ENCODE measurements at regions of chr9 and their contacts with region 1.

Region 1: GRCh38 chr9:35732122-35732799 is at the starts of genes CREB3 and TLN1:
- DNase-seq: peak; percentile 92 to 98 (median 96)
- ATAC-seq: peak; percentile 91
- H3K4me3 ChIP-seq: peak within 1 kb of the TSS; percentile 91 to 99
- H3K4me3 Mint-ChIP-seq: peak within 1 kb of the TSS; percentile 93
- H3K27ac ChIP-seq: peak within 1 kb of the TSS; percentile 84 to 96
- H3K27ac Mint-ChIP-seq: peak within 1 kb of the TSS; percentile 88
- H3K4me1 ChIP-seq: peaks cover 62% of the 10 kb centered on the region
- H3K4me1 Mint-ChIP-seq: peaks cover 24% of the 10 kb centered on the region
- H3K27me3 ChIP-seq: no peaks in the 10 kb centered on the region
- H3K27me3 Mint-ChIP-seq: no peaks in the 10 kb centered on the region
- CTCF ChIP-seq: no peak
- total RNA-seq, gene CREB3: 13.1 to 14.2 TPM
- total RNA-seq, gene TLN1: 128 to 129 TPM

Region 2: GRCh38 chr9:35102926-35103659 is 629.2 kb before region 1 on chr9 and contains the start of gene STOML2:
- CTCF ChIA-PET with region 1: no interaction called
- POLR2A ChIA-PET with region 1: no interaction called
- intact Hi-C with region 1: loop called (anchors 1 to 5 kb)
- DNase-seq: peak; percentile 83 to 97 (median 93)
- ATAC-seq: peak; percentile 96
- H3K4me3 ChIP-seq: peak within 1 kb of the TSS; percentile 78 to 95
- H3K4me3 Mint-ChIP-seq: peak within 1 kb of the TSS; percentile 89
- H3K27ac ChIP-seq: peak within 1 kb of the TSS; percentile 79 to 92
- H3K27ac Mint-ChIP-seq: peak within 1 kb of the TSS; percentile 90
- H3K4me1 ChIP-seq: peaks cover 14% of the 10 kb centered on the region
- H3K4me1 Mint-ChIP-seq: peaks cover 27% of the 10 kb centered on the region
- H3K27me3 ChIP-seq: no peaks in the 10 kb centered on the region
- H3K27me3 Mint-ChIP-seq: no peaks in the 10 kb centered on the region
- CTCF ChIP-seq: no peak
- total RNA-seq, gene STOML2: 30.5 to 31.3 TPM

Region 3: DNA sequence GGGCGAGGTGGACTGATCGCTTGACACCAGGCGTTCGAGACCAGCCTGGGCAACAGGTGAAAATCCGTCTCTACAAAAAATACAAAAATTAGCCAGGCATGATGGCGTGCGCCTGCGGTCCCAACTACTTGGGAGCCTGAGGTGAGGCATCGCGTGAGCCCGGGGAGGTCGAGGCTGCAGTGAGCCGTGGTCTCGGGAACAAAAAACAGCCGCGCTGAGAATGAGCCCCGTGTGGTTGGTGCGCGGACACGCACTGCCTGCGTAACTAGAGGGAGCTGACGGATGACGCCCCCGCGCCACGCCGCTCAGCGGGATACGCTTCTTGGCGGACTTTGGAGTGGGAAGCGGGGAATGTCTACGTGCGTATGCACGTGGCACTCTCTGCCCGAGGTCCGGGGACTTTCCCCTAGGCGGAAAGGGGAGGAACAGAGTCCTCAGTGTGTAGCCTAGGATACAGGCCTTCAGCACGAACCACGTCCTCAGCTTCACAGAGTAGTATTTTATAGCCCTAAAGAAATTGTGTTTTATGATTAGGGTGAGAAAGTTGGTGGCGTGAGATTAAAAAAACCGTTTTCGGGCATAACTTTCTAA is 74.6 kb before region 1 on chr9 and contains the start of gene RMRP:
- CTCF ChIA-PET with region 1: interaction called, 61 read pairs
- POLR2A ChIA-PET with region 1: interaction called, 17 read pairs
- intact Hi-C with region 1: loop called (anchors 1 kb)
- DNase-seq: peak; percentile 58 to 98 (median 83)
- ATAC-seq: peak; percentile 72
- H3K4me3 ChIP-seq: peak within 1 kb of the TSS; percentile 91 to 94
- H3K4me3 Mint-ChIP-seq: peak within 1 kb of the TSS; percentile 93
- H3K27ac ChIP-seq: peak within 1 kb of the TSS; percentile 99 to 100
- H3K27ac Mint-ChIP-seq: peak within 1 kb of the TSS; percentile 98
- H3K4me1 ChIP-seq: peaks cover 45% of the 10 kb centered on the region
- H3K4me1 Mint-ChIP-seq: peaks cover 69% of the 10 kb centered on the region
- H3K27me3 ChIP-seq: peaks cover 0 to 3% of the 10 kb centered on the region in 2 experiments
- H3K27me3 Mint-ChIP-seq: peaks cover 2% of the 10 kb centered on the region
- CTCF ChIP-seq: no peak
- total RNA-seq, gene RMRP: 22,073 to 26,359 TPM

Region 4: GRCh38 chr9:35748858-35749514 is 16.7 kb after region 1 on chr9 and contains the starts of genes GBA2 and RGP1:
- CTCF ChIA-PET with region 1: interaction called, 33 read pairs
- POLR2A ChIA-PET with region 1: interaction called, 38 read pairs
- intact Hi-C with region 1: loop called (anchors 1 kb)
- DNase-seq: peak in 8 of 9 experiments; percentile 50 to 80 (median 66)
- ATAC-seq: peak; percentile 66
- H3K4me3 ChIP-seq: peak within 1 kb of the TSS; percentile 80 to 91
- H3K4me3 Mint-ChIP-seq: peak within 1 kb of the TSS; percentile 98
- H3K27ac ChIP-seq: peak within 1 kb of the TSS; percentile 68 to 86
- H3K27ac Mint-ChIP-seq: peak within 1 kb of the TSS; percentile 94
- H3K4me1 ChIP-seq: peaks cover 41% of the 10 kb centered on the region
- H3K4me1 Mint-ChIP-seq: peaks cover 50% of the 10 kb centered on the region
- H3K27me3 ChIP-seq: no peaks in the 10 kb centered on the region
- H3K27me3 Mint-ChIP-seq: no peaks in the 10 kb centered on the region
- CTCF ChIP-seq: no peak
- total RNA-seq, gene GBA2: 14.1 to 14.3 TPM
- total RNA-seq, gene RGP1: 9.6 to 10.4 TPM

Region 5: DNA sequence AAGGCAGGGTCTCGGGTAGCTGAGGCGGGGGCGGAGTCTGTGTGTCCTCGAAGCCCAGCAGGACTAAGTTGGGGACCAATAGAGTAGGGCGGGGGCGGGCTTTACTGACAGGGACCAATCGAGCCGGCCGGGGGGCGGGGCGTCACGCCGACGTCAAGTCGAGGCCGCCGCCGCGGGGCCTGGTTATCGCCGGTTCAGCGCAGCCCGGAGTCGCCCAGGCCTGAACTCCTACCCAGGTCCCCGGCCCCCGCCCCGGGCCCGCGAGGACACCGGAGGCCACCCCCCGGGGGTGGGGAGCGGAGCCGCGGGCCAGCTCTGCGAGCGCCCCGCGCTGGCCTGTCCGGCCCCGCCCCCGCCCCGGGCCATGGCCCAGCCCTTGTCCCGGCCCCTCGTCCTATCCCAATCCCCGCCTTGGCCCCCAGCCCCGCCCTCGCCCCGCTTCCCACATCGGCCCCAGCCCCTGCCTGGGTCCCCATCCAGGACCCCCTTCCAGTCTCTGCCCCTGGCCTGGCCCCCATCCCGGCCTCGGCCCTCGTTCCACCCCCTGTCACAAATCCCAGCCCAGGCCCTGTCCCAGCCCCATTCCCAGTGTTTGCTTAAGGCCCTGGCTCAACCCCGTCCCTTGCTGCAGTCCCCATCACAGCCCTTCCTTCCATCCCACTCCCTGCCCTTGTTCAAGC is 97.0 kb after region 1 on chr9 and contains the start of gene TMEM8B:
- CTCF ChIA-PET with region 1: interaction called, 9 read pairs
- POLR2A ChIA-PET with region 1: no interaction called
- intact Hi-C with region 1: loop called (anchors 1 to 2 kb)
- DNase-seq: peak; percentile 88 to 96 (median 94)
- ATAC-seq: peak; percentile 93
- H3K4me3 ChIP-seq: peak within 1 kb of the TSS; percentile 67 to 89
- H3K4me3 Mint-ChIP-seq: peak within 1 kb of the TSS; percentile 95
- H3K27ac ChIP-seq: peak within 1 kb of the TSS; percentile 64 to 71
- H3K27ac Mint-ChIP-seq: peak within 1 kb of the TSS; percentile 91
- H3K4me1 ChIP-seq: peaks cover 13% of the 10 kb centered on the region
- H3K4me1 Mint-ChIP-seq: peaks cover 41% of the 10 kb centered on the region
- H3K27me3 ChIP-seq: no peaks in the 10 kb centered on the region
- H3K27me3 Mint-ChIP-seq: no peaks in the 10 kb centered on the region
- CTCF ChIP-seq: no peak
- total RNA-seq, gene TMEM8B: 6.4 to 7.2 TPM

Region 6: GRCh38 chr9:36258208-36258988 is 526.1 kb after region 1 on chr9 and contains the start of gene GNE:
- CTCF ChIA-PET with region 1: no interaction called
- POLR2A ChIA-PET with region 1: no interaction called
- intact Hi-C with region 1: loop called in 1 of 2 experiments (anchors 10 kb)
- DNase-seq: peak; percentile 95 to 99 (median 98)
- ATAC-seq: peak; percentile 89
- H3K4me3 ChIP-seq: peak within 1 kb of the TSS; percentile 85 to 100
- H3K4me3 Mint-ChIP-seq: peak within 1 kb of the TSS; percentile 98
- H3K27ac ChIP-seq: peak within 1 kb of the TSS; percentile 90 to 91
- H3K27ac Mint-ChIP-seq: peak within 1 kb of the TSS; percentile 97
- H3K4me1 ChIP-seq: peaks cover 17% of the 10 kb centered on the region
- H3K4me1 Mint-ChIP-seq: peaks cover 16% of the 10 kb centered on the region
- H3K27me3 ChIP-seq: no peaks in the 10 kb centered on the region
- H3K27me3 Mint-ChIP-seq: no peaks in the 10 kb centered on the region
- CTCF ChIP-seq: no peak
- total RNA-seq, gene GNE: 17.3 to 17.4 TPM

Measured in CD8-positive, alpha-beta T cell (primary cell).